ENCODE measurements at regions of chr1 and their contacts with region 1.

Region 1: GRCh38 chr1:176897350-176898236 is 266.9 kb downstream of the ASTN1 start:
- DNase-seq: no peak
- ATAC-seq: peak; percentile 84
- H3K4me3 ChIP-seq: no peak overlapping the region
- H3K27ac ChIP-seq: no peak overlapping the region
- H3K4me1 ChIP-seq: no peaks in the 10 kb centered on the region
- H3K27me3 ChIP-seq: peaks cover 15% of the 10 kb centered on the region
- CTCF ChIP-seq: peak; percentile 92

Region 2: GRCh38 chr1:176949033-176949662 is 51.6 kb after region 1 on chr1:
- CTCF ChIA-PET with region 1: no interaction called
- POLR2A ChIA-PET with region 1: no interaction called
- in situ Hi-C with region 1: no loop called
- intact Hi-C with region 1: loop called (anchors 5 kb)
- DNase-seq: peak; percentile 8
- ATAC-seq: peak; percentile 90
- H3K4me3 ChIP-seq: no peak overlapping the region
- H3K27ac ChIP-seq: no peak overlapping the region
- H3K4me1 ChIP-seq: no peaks in the 10 kb centered on the region
- H3K27me3 ChIP-seq: 0 out of 2 replicates have a peak, but pooled peaks cover 2% of the 10 kb centered on the region
- CTCF ChIP-seq: peak; percentile 84

Region 3: DNA sequence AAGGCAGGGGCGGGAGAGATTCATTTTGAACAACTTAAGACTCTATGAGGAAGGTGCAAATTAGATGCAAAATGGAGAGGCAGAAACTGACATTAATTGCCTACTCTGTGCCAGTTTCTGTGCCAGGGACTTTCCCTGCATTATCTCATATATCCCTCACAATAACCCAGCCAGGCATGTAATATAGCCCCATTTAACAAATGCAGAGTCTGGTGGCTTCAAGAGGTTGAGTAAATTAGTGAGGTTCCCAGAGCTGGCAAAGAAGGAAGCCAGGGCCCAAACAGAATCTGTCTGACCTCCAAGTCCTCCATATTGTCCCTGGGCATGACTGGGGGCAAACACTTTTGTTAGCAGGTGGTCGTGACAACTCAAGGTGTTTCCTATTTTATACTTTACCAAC is 67.1 kb after region 1 on chr1:
- CTCF ChIA-PET with region 1: no interaction called
- POLR2A ChIA-PET with region 1: no interaction called
- in situ Hi-C with region 1: no loop called
- intact Hi-C with region 1: no loop called
- DNase-seq: no peak
- ATAC-seq: no peak
- H3K4me3 ChIP-seq: no peak overlapping the region
- H3K27ac ChIP-seq: no peak overlapping the region
- H3K4me1 ChIP-seq: no peaks in the 10 kb centered on the region
- H3K27me3 ChIP-seq: 0 out of 2 replicates have a peak, but pooled peaks cover 2% of the 10 kb centered on the region
- CTCF ChIP-seq: no peak

Region 4: DNA sequence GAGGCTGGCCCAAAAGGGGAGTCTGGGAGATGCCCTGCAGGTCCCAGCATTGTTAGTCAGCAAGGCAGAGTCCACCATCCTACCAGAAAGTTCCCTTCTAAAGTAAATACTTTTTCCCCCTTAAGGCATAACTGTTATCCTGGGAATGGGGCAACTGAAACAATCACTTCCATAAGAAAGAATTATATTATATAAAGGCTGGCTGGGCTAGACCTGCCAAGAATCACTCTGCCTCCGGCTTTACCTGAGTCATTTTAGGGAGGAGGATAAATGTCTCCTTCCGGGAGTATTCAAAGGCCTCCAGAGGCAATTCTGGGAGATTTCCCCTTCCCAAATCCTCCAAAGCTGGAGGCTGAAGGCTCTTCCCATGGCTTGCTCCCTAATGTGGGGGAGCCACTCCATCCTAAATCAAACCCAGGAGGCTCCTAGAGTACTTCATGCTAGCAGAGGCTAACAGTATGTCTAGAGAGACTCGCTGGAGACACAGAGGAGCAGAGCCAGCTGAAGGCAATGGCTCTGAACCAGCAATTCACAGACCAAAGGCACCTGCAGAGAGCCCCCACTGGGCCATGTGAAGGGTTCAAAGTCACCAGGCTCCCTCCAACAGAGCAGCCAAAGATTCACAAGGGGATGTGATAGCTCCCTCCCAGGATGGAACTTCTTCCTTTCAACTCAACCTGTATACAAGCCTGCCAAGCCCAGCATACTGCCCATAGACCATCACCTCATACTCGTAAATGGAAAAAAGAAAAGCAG is 150.9 kb after region 1 on chr1:
- CTCF ChIA-PET with region 1: no interaction called
- POLR2A ChIA-PET with region 1: no interaction called
- in situ Hi-C with region 1: no loop called
- intact Hi-C with region 1: no loop called
- DNase-seq: no peak
- ATAC-seq: no peak
- H3K4me3 ChIP-seq: no peak overlapping the region
- H3K27ac ChIP-seq: no peak overlapping the region
- H3K4me1 ChIP-seq: no peaks in the 10 kb centered on the region
- H3K27me3 ChIP-seq: no peaks in the 10 kb centered on the region
- CTCF ChIP-seq: no peak

Region 5: GRCh38 chr1:177181631-177182291 is 284.2 kb after region 1 on chr1:
- CTCF ChIA-PET with region 1: interaction called, 5 read pairs
- POLR2A ChIA-PET with region 1: no interaction called
- in situ Hi-C with region 1: no loop called
- intact Hi-C with region 1: loop called (anchors 2 kb)
- DNase-seq: peak; percentile 50
- ATAC-seq: peak; percentile 96
- H3K4me3 ChIP-seq: peak overlapping the region in 1 of 2 experiments; percentile 38; a peak in 2 of 4 replicates
- H3K27ac ChIP-seq: no peak overlapping the region
- H3K4me1 ChIP-seq: no peaks in the 10 kb centered on the region
- H3K27me3 ChIP-seq: peaks cover 18% of the 10 kb centered on the region
- CTCF ChIP-seq: peak; percentile 90

Region 6: GRCh38 chr1:177355595-177355994 is 458.0 kb after region 1 on chr1:
- CTCF ChIA-PET with region 1: interaction called, 12 read pairs
- POLR2A ChIA-PET with region 1: no interaction called
- in situ Hi-C with region 1: no loop called
- intact Hi-C with region 1: no loop called
- DNase-seq: peak; percentile 2
- ATAC-seq: no peak
- H3K4me3 ChIP-seq: no peak overlapping the region
- H3K27ac ChIP-seq: no peak overlapping the region
- H3K4me1 ChIP-seq: no peaks in the 10 kb centered on the region
- H3K27me3 ChIP-seq: no peaks in the 10 kb centered on the region
- CTCF ChIP-seq: peak; percentile 37

Region 7: GRCh38 chr1:177780096-177780700 is 882.6 kb after region 1 on chr1:
- CTCF ChIA-PET with region 1: no interaction called
- POLR2A ChIA-PET with region 1: no interaction called
- in situ Hi-C with region 1: no loop called
- intact Hi-C with region 1: loop called (anchors 10 kb)
- DNase-seq: peak; percentile 20
- ATAC-seq: peak; percentile 83
- H3K4me3 ChIP-seq: no peak overlapping the region
- H3K27ac ChIP-seq: no peak overlapping the region
- H3K4me1 ChIP-seq: no peaks in the 10 kb centered on the region
- H3K27me3 ChIP-seq: 0 out of 2 replicates have a peak, but pooled peaks cover 4% of the 10 kb centered on the region
- CTCF ChIP-seq: peak; percentile 71

Region 8: GRCh38 chr1:177948336-177948972 is 1050.9 kb after region 1 on chr1:
- CTCF ChIA-PET with region 1: no interaction called
- POLR2A ChIA-PET with region 1: no interaction called
- in situ Hi-C with region 1: no loop called
- intact Hi-C with region 1: loop called (anchors 5 kb)
- DNase-seq: peak; percentile 62
- ATAC-seq: peak; percentile 78
- H3K4me3 ChIP-seq: no peak overlapping the region
- H3K27ac ChIP-seq: no peak overlapping the region
- H3K4me1 ChIP-seq: no peaks in the 10 kb centered on the region
- H3K27me3 ChIP-seq: no peaks in the 10 kb centered on the region
- CTCF ChIP-seq: peak; percentile 95